PC-9 (cell line): ENCODE measurements at regions of chr7 and their contacts with region 1.

Region 1: DNA sequence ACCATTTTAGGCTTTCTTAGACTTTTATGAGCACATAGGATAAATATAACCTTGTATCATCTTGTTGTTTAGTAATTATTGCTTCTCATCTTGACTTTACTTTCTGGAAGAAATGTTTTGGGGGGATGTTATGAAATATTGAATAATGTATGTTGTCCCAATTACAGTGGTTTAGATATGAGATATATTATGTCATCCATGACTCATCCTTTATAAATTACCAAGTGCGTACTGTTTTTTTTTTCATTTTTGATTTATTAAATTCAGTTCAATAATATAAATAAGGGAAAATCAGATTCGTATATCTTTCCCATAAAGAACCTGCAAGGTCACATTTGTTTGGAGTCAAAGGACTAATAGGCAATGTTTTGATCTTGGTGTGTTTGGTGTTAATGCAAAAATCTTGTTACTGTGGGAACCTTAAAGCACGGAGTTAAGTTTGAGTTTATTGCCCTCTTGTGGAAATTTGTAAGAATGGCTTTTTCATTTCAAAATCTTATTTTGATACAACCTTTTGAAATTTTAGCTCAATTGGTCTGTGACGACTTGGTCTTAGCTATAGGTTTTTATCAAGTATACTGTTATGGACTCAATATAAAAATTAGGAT is 108.6 kb downstream of the SRI start:
- DNase-seq: peak in 1 of 2 experiments; percentile 54
- H3K4me3 ChIP-seq: no peak overlapping the region
- H3K27ac ChIP-seq: no peak overlapping the region
- H3K4me1 ChIP-seq: no peaks in the 10 kb centered on the region
- H3K27me3 ChIP-seq: no peaks in the 10 kb centered on the region
- CTCF ChIP-seq: peak; percentile 76

Region 2: GRCh38 chr7:87797798-87798403 is 313.3 kb before region 1 on chr7:
- CTCF ChIA-PET with region 1: interaction called, 3 read pairs
- POLR2A ChIA-PET with region 1: no interaction called
- intact Hi-C with region 1: loop called (anchors 1 kb)
- DNase-seq: peak in 1 of 2 experiments; percentile 35
- H3K4me3 ChIP-seq: no peak overlapping the region
- H3K27ac ChIP-seq: no peak overlapping the region
- H3K4me1 ChIP-seq: no peaks in the 10 kb centered on the region
- H3K27me3 ChIP-seq: no peaks in the 10 kb centered on the region
- CTCF ChIP-seq: peak; percentile 74

Region 3: DNA sequence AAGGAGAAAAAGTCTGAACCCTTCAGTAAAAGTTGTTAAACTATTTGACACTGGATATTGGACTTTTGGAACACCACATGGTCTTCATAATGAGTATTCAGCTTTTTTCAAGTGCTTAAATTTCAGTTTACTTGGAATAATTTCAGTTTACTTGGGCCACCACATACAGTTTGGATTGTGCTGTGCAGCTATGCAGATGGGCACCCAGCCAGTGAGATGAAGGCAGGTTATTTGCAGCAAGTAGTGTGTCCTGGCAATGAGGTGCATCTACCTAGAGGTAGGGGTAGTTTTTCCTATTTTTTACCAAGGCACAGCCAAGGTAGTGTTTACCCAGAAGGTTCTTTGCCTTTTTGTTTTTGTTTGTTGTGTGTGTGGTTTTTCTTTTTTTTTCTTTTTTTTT is 201.1 kb before region 1 on chr7:
- CTCF ChIA-PET with region 1: no interaction called
- POLR2A ChIA-PET with region 1: no interaction called
- intact Hi-C with region 1: loop called (anchors 10 kb)
- DNase-seq: no peak
- H3K4me3 ChIP-seq: no peak overlapping the region
- H3K27ac ChIP-seq: no peak overlapping the region
- H3K4me1 ChIP-seq: no peaks in the 10 kb centered on the region
- H3K27me3 ChIP-seq: no peaks in the 10 kb centered on the region
- CTCF ChIP-seq: no peak